Naive thymus-derived CD8-positive, alpha-beta T cell (primary cell): ENCODE measurements at regions of chr16 and their contacts with region 1.

Region 1: DNA sequence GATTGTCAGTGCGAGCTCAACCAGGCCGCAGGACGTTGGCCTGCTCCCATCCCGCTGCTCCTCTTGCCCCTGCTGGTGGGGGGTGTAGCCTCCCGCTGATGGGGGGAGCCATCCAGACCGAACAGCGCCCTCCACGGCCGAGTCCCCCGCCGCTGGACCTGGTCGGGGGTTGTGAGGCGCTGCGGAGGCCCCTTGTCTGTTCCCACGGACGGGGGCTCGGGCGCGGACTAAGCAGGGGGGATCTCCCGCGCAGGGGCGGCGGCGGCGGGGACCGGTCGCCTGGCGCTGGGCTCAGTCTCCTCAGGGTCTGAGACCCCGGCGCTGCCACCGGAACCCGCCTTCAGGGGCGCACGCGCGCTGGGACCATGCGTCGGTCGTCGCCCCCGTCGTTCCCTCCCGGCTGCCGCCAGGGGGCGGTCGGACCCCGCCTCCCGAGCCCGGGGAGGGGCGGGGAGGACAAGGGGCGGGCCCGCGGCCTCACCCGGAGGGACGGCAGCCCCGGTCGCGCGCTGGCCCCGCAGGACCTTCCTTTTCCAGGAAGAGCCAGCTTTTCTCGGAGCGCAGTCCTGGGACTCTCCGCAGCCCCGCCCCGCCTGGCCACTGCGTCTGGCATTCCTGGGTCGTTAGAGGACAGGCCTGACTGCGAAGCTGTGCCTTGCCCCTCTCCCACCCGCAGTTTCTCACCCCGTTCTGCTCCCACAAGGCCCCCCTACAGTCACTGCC is 6.3 kb upstream of the IL32 start:
- DNase-seq: peak; percentile 75 to 93 (median 90)
- ATAC-seq: peak; percentile 90
- H3K4me3 Mint-ChIP-seq: peak overlapping the region; percentile 83 to 95 (median 88)
- H3K27ac Mint-ChIP-seq: peak overlapping the region; percentile 84 to 95 (median 92)
- H3K4me1 Mint-ChIP-seq: peaks cover 23 to 64% (median 55%) of the 10 kb centered on the region in 4 donors
- H3K27me3 Mint-ChIP-seq: no peaks in the 10 kb centered on the region

Region 2: GRCh38 chr16:2784951-2785635 is 274.1 kb before region 1 on chr16:
- POLR2A ChIA-PET with region 1: no interaction called
- DNase-seq: peak in 6 of 10 donors; percentile 40 to 69 (median 50)
- ATAC-seq: peak; percentile 85 to 87
- H3K4me3 Mint-ChIP-seq: peak overlapping the region; percentile 80 to 92 (median 86)
- H3K27ac Mint-ChIP-seq: peak overlapping the region; percentile 53 to 92 (median 72)
- H3K4me1 Mint-ChIP-seq: peaks cover 5 to 19% (median 14%) of the 10 kb centered on the region in 4 donors
- H3K27me3 Mint-ChIP-seq: peaks cover 0 to 6% (median 1%) of the 10 kb centered on the region in 5 donors

Region 3: DNA sequence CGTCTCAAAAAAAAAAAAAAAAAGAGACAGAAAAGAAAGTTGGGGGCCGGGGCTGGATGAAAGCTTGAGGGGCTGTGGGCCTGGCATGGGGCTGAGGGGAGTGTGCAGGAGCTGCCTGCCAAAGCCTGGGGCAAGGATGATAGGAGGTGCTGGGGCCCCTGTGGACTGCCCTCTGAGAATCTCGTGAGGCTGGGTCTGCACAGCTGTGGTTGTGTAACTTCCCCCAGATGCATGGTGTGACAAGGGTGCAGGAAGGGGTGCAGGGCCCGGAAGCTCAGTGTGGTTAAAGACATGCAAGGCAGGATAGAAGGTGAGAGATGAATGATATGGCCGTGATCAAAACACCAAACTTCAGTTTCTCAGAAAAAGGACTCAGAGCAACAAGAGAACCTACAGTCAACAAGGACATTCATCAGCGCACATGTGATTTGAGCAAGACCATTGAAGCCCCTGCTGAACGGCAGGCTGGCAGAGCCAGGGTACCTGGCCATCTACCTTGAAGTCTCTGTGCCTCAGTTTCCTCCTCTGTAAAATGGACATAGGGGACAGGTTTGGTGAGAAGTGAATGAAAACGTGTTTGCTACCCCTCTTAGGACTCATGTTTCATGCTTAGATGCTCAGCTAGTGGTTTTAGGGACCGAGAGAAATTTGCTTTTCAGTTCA is 15.8 kb after region 1 on chr16:
- POLR2A ChIA-PET with region 1: interaction called, 155 read pairs
- DNase-seq: peak; percentile 37 to 93 (median 82)
- ATAC-seq: peak; percentile 91 to 96
- H3K4me3 Mint-ChIP-seq: peak overlapping the region; percentile 58 to 89 (median 82)
- H3K27ac Mint-ChIP-seq: peak overlapping the region; percentile 92 to 100 (median 98)
- H3K4me1 Mint-ChIP-seq: peaks cover 53 to 89% (median 87%) of the 10 kb centered on the region in 4 donors
- H3K27me3 Mint-ChIP-seq: no peaks in the 10 kb centered on the region

Region 4: GRCh38 chr16:3094289-3095027 is 35.3 kb after region 1 on chr16:
- POLR2A ChIA-PET with region 1: interaction called, 261 read pairs
- DNase-seq: peak in 8 of 10 donors; percentile 47 to 75 (median 56)
- ATAC-seq: peak; percentile 45 to 50
- H3K4me3 Mint-ChIP-seq: peak overlapping the region in 5 of 10 donors; percentile 7 to 34 (median 13)
- H3K27ac Mint-ChIP-seq: peak overlapping the region in 9 of 10 donors; percentile 22 to 84 (median 66)
- H3K4me1 Mint-ChIP-seq: peaks cover 13 to 56% (median 34%) of the 10 kb centered on the region in 4 donors
- H3K27me3 Mint-ChIP-seq: no peaks in the 10 kb centered on the region

Region 5: GRCh38 chr16:3106205-3106928 is 47.2 kb after region 1 on chr16:
- POLR2A ChIA-PET with region 1: interaction called, 261 read pairs
- DNase-seq: peak; percentile 82 to 95 (median 88)
- ATAC-seq: peak; percentile 90 to 95
- H3K4me3 Mint-ChIP-seq: peak overlapping the region; percentile 78 to 93 (median 89)
- H3K27ac Mint-ChIP-seq: peak overlapping the region; percentile 81 to 96 (median 90)
- H3K4me1 Mint-ChIP-seq: peaks cover 15 to 41% (median 34%) of the 10 kb centered on the region in 4 donors
- H3K27me3 Mint-ChIP-seq: no peaks in the 10 kb centered on the region